WTC11 (cell line): ENCODE measurements at regions of chr14 and their contacts with region 1.

Region 1: DNA sequence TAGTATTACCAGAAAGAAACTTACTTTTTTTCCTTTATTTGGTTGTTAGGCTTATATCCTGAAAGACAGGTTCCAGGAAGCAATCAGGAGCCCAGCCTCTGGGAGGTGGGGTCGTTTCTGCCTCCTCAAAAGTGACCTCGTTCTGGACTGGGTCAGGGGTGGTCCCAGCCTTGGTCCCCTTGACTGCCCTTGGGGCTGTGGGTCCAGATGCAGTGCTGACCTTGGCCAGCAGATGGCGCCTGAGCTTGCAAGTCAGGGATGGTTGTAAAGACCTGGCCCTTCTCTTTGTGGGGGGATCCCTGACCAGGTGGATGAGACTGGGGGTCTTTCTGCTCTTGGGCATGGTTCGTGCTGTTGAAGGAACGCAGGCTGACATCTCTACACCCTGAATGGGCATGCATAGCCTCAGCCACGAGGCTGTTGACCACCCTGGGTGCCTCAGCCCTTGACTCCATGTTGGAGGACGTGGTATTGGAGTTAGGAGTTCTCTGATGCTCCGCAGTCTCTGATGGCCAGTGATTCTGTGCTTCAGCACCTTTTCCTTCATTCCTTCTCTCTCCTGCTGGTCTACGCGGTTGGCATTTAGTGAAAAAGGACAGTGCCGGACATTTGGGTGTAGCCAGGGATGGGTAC is 62.4 kb downstream of the ADCK1 start:
- DNase-seq: peak; percentile 97
- ATAC-seq: peak; percentile 96
- H3K4me3 Mint-ChIP-seq: no peak overlapping the region
- H3K27ac Mint-ChIP-seq: no peak overlapping the region
- H3K4me1 Mint-ChIP-seq: no peaks in the 10 kb centered on the region
- H3K27me3 Mint-ChIP-seq: no peaks in the 10 kb centered on the region
- CTCF ChIP-seq: peak; percentile 97

Region 2: DNA sequence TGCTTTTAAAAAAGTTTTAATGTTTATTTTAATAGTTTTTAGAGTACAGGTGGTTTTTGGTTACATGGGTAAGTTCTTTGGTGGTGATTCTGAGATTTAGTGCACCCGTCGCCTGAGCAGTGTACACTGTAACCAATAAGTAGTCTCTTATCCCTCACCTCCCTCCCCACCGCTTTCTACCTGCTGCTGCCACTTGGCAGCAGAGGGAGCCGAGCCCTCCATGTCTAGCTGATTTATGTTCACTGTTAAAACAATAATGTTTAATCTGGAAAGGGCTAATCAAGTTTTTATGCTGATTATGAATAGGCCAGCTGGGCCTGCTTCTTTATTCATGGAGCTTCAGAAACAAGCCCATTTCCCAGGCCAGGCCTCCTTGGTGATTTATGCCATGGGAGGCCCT is 10.7 kb after region 1 on chr14:
- CTCF ChIA-PET with region 1: interaction called, 23 read pairs
- POLR2A ChIA-PET with region 1: no interaction called
- DNase-seq: no peak
- ATAC-seq: no peak
- H3K4me3 Mint-ChIP-seq: no peak overlapping the region
- H3K27ac Mint-ChIP-seq: no peak overlapping the region
- H3K4me1 Mint-ChIP-seq: no peaks in the 10 kb centered on the region
- H3K27me3 Mint-ChIP-seq: no peaks in the 10 kb centered on the region; the same call in 1 of the 2 replicates
- CTCF ChIP-seq: no peak

Region 3: GRCh38 chr14:77980475-77981321 is 118.4 kb after region 1 on chr14:
- CTCF ChIA-PET with region 1: interaction called, 27 read pairs
- POLR2A ChIA-PET with region 1: no interaction called
- DNase-seq: peak; percentile 64
- ATAC-seq: peak; percentile 83
- H3K4me3 Mint-ChIP-seq: peak overlapping the region; percentile 74
- H3K27ac Mint-ChIP-seq: no peak overlapping the region
- H3K4me1 Mint-ChIP-seq: peaks cover 25% of the 10 kb centered on the region
- H3K27me3 Mint-ChIP-seq: peaks cover 17% of the 10 kb centered on the region
- CTCF ChIP-seq: no peak